Head of caudate nucleus (tissue), 42 donors: ENCODE measurements at regions of chr16 and their contacts with region 1.

Region 1: DNA sequence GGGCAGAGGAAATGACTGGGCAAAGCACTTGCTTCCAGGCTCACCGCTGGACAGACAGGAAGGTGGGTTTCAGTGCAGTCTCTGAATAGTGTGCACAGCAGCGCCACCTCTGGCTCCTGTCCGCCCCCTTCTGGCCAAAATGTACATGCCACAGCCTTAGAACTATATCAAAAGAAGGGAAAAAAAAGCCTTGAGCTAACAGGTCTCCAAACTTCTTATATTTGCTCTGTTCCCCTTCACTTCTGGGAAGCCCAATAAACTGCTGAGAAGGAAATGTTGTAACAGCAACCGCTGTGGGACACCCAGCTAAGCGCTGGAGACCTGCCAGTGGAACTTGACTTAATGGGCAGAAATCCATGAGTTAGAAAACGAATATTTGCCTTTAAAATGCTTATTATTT is 17.5 kb downstream of the COG7 start:
- DNase-seq: peak in 39 of 42 donors; percentile 14 to 73 (median 49)

Region 2: GRCh38 chr16:22898874-22899348 is 536.6 kb before region 1 on chr16:
- intact Hi-C with region 1: loop called (anchors 10 kb)
- DNase-seq: peak; percentile 61 to 96 (median 86)

Region 3: DNA sequence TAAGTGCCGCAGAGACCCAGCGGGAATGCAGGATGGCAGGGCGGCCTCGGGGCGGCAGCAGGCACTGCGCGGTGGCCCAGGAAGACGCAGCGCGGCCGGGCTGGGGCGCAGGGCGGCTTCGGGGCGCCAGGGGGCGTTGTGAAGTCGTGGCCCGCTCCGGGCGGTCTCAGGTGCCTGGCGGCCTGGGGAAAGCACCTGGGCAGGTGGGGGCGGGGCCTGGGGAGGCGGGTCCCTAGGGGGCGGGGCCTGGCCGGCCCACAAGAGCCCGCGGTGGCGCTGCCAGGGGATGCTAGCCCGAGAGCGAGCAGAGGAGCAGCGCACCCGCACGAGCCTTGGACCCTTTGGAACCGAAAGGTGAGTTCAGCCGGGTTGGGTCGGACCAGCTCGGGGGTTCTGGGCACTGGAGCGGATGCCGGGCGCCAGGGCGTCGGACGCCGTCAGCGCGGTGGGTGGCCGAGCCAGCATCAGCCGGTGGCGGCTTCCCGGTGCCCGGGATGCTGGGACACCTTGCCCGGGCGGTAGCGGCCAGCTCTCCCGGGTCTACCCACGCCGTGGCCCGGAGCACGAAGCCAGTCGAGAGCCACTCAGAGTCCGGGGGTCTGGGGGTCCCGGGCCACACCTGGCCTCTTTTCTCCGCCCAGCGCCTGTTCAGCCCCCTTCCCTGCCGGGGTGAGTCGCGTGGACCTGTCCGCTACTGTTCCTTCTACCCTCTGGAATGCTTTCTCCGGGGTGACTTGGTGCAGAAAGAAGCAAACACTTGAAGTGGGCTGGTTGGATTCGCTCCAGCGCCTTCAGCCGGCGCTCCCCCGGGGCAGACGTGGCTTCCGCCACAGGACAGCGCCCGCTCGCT is 252.8 kb before region 1 on chr16 and contains the start of gene SCNN1G:
- intact Hi-C with region 1: loop called (anchors 2 kb)
- DNase-seq: peak; percentile 37 to 87 (median 74)

Region 4: GRCh38 chr16:23334457-23334853 is 101.0 kb before region 1 on chr16:
- intact Hi-C with region 1: no loop called
- DNase-seq: no peak